ENCODE measurements at regions of chr1 and their contacts with region 1.

Region 1: DNA sequence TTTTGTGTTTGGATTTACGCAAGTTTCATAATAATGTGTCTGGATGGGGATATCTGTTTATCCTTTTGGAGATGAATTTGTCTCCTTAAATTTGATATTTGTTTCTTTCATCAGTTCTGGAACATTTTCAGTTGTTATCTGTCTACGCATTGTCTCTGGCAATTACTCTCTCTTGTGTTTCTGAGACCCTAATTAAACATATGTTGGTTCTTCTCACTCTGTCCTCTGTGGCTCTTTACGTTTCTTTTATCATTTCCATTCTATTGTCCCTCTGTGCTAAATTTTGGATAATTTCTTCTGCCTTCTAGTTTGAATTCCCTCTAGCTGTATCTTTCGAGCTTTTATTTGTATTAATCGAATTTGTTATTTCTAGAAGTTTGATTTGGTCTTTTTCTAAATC is 17.5 kb upstream of the PRELP start:
- DNase-seq: no peak
- ATAC-seq: no peak
- H3K4me3 ChIP-seq: no peak overlapping the region
- H3K27ac ChIP-seq: no peak overlapping the region
- H3K4me1 ChIP-seq: no peaks in the 10 kb centered on the region
- H3K27me3 ChIP-seq: peaks cover 50% of the 10 kb centered on the region
- CTCF ChIP-seq: no peak

Region 2: GRCh38 chr1:203304919-203305808 is 152.9 kb before region 1 on chr1 and contains the start of gene BTG2:
- CTCF ChIA-PET with region 1: interaction called, 6 read pairs
- POLR2A ChIA-PET with region 1: interaction called, 20 read pairs
- intact Hi-C with region 1: no loop called
- DNase-seq: peak; percentile 85
- ATAC-seq: peak; percentile 86
- H3K4me3 ChIP-seq: peak within 1 kb of the TSS; percentile 85
- H3K27ac ChIP-seq: no peak within 1 kb of the TSS
- H3K4me1 ChIP-seq: peaks cover 15% of the 10 kb centered on the region
- H3K27me3 ChIP-seq: peaks cover 11% of the 10 kb centered on the region; the same call in 1 of the 2 replicates
- CTCF ChIP-seq: no peak
- total RNA-seq, gene BTG2: 2.2 and 2.4 TPM in 2 replicates

Region 3: GRCh38 chr1:203692565-203693470 is 234.7 kb after region 1 on chr1:
- CTCF ChIA-PET with region 1: no interaction called
- POLR2A ChIA-PET with region 1: no interaction called
- intact Hi-C with region 1: no loop called
- DNase-seq: peak; percentile 93
- ATAC-seq: peak; percentile 87
- H3K4me3 ChIP-seq: no peak overlapping the region; the same call in 1 of the 2 replicates
- H3K27ac ChIP-seq: peak overlapping the region; percentile 99
- H3K4me1 ChIP-seq: peaks cover 26% of the 10 kb centered on the region
- H3K27me3 ChIP-seq: no peaks in the 10 kb centered on the region
- CTCF ChIP-seq: no peak